Activated CD4-positive, alpha-beta memory T cell treated with anti-CD3 and anti-CD28 coated beads, Interleukin-2, amount 10 ng/mL, durations not matched to agents 7 days and 5 days (primary cell): ENCODE measurements at regions of chr1 and their contacts with region 1.

Region 1: DNA sequence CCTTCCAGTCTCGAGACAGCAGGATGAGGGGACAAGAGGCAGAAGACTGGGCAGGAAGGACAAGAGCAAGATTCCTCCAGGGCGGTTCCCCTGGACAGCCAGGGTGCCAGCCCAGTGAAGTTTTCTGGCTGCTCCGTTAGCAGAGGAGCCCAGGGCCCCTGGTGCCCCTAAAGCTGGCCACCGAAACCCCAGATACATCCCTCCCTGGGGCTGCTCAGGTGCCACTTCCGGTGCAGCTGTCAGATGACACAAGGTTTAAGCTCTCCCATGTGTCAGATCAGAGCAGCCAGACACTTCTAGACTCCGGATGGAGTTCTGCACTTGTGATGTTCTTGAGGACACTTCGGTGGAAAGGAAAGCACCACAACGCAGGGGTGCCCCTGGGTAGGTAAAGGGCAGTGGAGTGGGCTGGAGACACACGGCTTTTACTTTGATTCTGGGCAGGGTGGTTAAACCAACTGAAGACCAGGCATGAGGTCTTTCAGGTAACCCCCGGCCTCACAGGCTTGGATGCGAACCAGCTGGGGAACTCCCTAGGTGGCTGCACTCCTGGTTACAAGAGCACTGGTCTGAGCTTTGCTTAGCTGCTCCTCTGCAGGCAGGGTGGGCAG is 85.7 kb downstream of the ITPKB start:
- DNase-seq: peak; percentile 75
- H3K4me3 Mint-ChIP-seq: peak overlapping the region; percentile 56
- H3K27ac Mint-ChIP-seq: peak overlapping the region; percentile 88
- H3K4me1 Mint-ChIP-seq: peaks cover 62% of the 10 kb centered on the region
- H3K27me3 Mint-ChIP-seq: no peaks in the 10 kb centered on the region

Region 2: GRCh38 chr1:226702957-226703831 is 49.8 kb after region 1 on chr1:
- CTCF ChIA-PET with region 1: no interaction called
- POLR2A ChIA-PET with region 1: interaction called, 11 read pairs
- DNase-seq: peak; percentile 79
- H3K4me3 Mint-ChIP-seq: peak overlapping the region; percentile 79
- H3K27ac Mint-ChIP-seq: peak overlapping the region; percentile 87
- H3K4me1 Mint-ChIP-seq: peaks cover 48% of the 10 kb centered on the region
- H3K27me3 Mint-ChIP-seq: no peaks in the 10 kb centered on the region